ENCODE measurements at regions of chr1 and their contacts with region 1.

Region 1: DNA sequence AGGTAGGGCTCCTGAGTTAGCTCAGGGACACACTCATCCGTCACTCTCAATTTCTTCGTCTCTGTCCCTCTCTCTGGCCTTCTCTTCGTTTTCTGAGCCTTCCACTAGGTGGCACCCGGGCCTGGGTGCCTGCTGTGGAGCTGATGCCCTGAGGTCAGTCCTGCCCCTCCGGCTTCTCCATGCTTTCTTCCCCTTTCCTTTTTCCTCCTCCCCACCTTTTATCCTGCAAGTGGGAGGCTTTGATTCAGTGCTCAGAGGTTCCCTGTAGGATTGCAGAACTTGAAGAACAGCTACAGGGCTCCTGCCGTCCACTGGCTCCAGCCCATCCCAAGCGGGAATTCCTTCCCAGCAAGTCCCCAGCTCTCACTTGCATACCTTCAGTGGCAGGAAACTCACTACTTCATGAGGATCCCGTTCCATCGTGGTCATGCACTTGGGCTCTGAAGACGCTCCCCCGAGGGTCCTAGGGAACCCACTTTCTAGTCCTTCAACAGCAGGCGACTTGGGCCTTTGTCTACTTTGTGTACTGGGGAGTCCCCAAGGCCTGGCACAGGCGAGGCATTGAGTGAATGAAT is 45.6 kb downstream of the SRRM1 start:
- DNase-seq: no peak
- H3K4me3 ChIP-seq: no peak overlapping the region
- CTCF ChIP-seq: peak; percentile 89

Region 2: DNA sequence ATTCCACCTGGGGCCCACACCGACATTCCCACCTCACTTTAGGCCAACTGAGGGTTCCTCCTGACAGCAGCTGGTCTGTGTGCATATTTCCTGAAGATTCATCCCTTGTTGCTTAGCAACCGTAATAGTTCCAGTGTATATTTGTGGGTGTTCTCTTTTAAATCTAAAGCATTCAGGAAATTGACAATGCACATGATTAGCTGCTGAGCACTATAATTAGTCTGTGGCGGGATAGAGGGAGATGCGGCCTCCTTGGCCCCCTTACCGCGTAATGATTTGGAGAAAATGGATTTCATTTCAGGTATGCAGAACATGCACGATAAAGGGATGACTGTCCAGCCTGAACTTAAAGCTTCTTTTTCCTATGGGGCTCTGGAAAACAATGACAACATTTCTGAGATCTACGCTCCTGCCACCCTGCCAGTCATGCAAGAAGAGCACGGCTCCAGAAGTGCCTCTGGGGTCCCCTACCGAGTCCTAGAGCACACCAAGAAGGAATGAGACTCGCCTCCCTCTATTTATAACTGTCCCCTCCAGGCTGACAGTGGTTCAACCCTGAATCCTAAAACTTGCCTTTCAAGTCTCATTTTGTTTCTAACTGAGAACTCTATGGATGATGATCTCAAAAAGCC is 219.9 kb before region 1 on chr1:
- CTCF ChIA-PET with region 1: no interaction called
- POLR2A ChIA-PET with region 1: no interaction called
- DNase-seq: no peak
- H3K4me3 ChIP-seq: no peak overlapping the region
- CTCF ChIP-seq: no peak

Region 3: DNA sequence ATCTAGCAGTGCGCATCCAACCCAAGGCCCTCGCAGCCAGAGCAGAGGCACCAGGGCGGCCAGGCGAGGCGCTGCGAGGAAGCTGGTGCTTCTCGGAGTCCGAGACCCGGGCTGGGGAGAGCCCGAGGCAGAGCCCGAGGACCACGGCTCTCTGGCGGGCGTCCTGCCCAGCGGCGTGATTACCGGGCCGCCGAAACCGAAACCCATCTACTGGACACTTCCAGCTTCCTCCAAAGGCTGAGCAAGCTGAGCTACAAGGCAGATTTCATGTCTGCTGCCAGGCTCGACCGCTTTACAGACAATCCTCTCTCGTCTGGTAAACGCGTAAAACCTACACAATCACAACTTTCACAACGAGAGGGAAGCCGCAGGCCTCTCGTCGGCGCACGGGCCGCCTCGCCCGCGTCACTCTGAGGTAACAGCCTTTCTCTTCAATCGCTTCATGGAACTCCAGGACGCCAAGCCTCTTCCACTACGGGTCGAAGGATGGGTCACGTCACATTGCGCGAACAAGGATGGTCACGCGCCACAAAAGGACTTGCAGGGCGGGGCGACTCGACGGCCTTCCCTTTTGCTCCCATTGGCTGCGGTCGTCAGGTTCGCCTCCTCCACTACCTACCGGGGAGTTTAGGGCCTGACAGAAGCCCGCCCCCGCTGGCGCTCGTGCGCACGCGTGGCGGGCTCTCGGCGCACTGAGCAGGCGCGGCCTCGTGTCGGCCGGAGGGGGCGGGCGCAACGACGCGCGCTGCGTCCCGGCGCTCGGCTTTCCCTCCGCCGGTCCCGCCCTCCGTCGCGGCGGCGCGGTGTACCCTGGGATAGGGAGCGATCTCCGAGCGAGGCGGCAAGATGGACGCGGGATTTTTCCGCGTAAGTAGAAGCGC is 46.0 kb before region 1 on chr1 and contains the start of gene SRRM1:
- CTCF ChIA-PET with region 1: interaction called, 15 read pairs
- POLR2A ChIA-PET with region 1: no interaction called
- DNase-seq: peak; percentile 99
- H3K4me3 ChIP-seq: peak within 1 kb of the TSS; percentile 95
- CTCF ChIP-seq: peak; percentile 34

Region 4: GRCh38 chr1:24735509-24736375 is 47.0 kb after region 1 on chr1:
- CTCF ChIA-PET with region 1: interaction called, 10 read pairs
- POLR2A ChIA-PET with region 1: no interaction called
- DNase-seq: no peak
- H3K4me3 ChIP-seq: no peak overlapping the region
- CTCF ChIP-seq: no peak

Region 5: DNA sequence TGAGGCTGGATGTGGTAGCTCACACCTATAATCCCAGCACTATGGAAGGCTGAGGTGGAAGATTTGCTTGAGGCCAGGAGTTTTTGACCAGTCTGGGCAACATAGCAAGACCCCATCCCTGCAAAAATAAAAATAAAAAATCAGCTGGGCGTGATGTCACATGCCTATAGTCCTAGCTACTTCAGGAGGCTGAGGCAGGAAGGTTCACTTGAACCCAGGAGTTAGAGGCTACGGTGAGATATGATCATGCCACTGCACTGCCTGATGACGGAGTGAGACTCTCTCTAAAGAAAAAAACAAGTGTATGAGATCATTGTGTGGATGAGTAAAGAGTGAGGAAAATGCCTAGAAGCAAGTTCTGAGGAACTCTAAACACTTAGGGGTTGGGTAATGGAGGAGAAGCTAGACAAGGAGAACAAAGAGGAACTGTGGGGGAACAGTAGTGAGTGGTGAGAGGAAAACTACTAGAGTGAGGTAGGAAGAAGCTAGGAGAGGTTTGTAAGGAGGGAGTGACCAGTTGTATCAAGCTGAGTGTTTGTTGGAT is 73.5 kb after region 1 on chr1:
- CTCF ChIA-PET with region 1: interaction called, 15 read pairs
- POLR2A ChIA-PET with region 1: interaction called, 6 read pairs
- DNase-seq: no peak
- H3K4me3 ChIP-seq: no peak overlapping the region
- CTCF ChIP-seq: no peak

Region 6: DNA sequence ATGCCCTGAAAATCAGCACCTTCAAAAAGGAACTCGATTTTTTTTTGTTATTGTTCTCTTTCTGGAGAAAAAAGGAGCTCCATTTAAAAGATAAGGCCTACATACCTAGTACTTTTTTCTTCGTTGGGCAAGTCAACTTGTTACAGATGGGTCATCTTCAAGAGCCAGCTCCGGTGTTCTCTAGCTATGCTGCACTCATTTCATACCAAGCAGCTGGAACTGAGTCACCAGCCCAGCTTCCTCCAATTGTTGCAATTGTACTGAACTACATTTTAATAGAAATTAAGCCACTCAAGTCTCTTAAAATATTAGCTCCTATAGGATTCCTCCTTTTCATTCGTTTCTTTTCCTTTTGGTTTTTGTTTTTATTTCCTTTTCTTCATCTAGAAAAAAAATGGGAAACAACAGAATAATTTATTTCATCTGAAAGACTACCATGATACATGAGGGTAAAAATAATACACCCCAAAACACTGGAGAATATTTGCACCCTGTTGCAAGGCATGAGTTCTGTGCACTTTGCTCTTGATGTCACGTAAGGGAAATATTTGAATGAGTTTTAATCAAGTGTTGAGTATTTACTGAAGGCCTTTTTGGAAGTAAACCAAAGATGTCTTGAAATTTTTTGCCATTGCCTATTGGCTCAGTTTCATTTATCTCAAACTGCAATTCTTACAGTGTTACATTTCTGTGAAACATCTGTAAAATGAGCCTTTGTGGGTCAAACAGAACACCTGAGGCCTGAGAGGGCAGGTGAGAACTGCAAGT is 117.0 kb after region 1 on chr1:
- CTCF ChIA-PET with region 1: interaction called, 11 read pairs
- POLR2A ChIA-PET with region 1: no interaction called
- DNase-seq: no peak
- H3K4me3 ChIP-seq: no peak overlapping the region
- CTCF ChIP-seq: no peak

Region 7: DNA sequence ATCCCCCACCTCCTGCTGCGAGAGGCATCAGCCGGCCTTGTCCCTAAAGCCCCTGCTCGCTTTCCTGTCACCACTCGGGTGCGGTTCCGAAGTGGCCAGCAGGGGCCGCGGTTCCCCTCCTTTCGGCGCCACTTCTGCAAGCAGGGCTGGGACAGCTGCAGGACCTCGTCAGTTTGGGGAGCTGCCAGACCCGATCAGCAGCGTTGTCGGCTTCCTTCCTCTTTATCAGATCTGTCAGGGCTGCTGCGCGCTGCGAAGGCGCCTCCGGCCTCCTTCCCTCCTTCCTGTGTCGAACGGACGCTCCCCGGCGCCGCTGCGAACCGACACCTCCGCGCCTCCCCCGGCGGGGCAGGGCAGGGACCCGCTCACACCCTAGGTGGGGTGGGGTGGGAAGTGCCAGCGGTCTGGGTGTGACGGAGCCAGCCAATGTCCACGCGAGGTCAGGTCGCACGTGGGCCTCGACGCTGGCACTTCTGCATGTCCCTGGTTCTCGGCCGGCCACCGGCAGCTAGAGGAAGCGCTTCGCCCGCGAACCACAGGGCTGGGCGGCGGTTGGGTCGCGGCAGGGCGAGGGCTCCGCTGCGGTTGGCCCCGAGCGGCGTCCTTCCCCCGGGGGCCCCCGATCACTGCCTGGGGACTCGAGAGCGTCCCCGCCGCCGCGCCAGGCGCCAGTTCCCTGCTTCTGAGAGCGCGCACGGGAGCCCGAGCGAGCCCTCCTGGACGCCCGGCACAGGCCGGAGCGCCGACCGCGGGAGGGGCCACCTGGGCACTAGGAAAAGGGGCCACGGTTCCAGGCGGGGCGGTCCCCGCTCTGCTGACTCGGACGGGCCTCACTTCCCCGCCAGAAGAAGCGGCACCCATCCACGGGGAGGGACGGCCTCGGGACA is 159.5 kb after region 1 on chr1:
- CTCF ChIA-PET with region 1: interaction called, 36 read pairs
- POLR2A ChIA-PET with region 1: no interaction called
- DNase-seq: peak; percentile 42
- H3K4me3 ChIP-seq: peak overlapping the region; percentile 54
- CTCF ChIP-seq: peak; percentile 94

Measured in AG04449 (cell line).